B cell (primary cell): ENCODE measurements at regions of chr4 and their contacts with region 1.

Region 1: DNA sequence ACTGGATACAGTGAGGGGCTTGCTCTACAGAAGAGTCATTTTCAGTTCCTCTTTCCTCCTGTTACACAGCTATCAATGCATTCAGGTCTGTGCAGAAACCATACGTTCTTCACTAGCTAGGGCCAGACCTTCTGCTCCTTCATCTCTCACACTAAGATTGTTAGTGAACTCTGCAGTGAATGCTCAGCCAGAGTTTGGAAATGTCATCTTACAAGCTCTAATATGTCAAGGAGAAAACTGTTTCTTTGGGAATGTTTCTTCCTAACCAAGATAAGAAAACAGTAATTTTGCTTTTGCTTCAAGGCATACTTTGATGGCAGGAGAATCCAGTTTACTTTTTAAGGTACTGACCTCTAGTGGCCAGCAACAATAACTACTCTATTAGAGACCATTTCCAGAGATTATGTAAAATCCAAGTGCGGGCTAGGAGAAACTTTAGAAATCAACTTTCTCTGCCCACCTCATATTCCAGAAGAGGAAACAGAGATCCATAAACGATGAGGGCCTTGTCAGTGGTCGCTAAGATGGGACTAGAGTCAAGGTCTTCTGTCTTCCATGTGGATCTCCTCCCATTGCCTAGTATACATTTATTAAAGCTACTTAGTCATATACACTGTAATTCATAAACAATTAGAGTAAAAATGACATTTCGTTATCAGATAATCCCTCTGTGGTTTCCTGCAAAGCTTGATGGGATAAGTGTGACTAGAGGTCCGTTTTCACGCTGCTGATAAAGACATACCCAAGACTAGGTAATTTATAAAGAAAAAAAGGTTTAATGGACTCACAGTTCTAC is 12.1 kb upstream of the CC2D2A start:
- DNase-seq: peak; percentile 83
- ATAC-seq: peak; percentile 99
- H3K4me3 ChIP-seq: peak overlapping the region in 2 of 5 experiments; percentile 24 to 30
- H3K4me3 Mint-ChIP-seq: peak overlapping the region; percentile 81
- H3K27ac ChIP-seq: peak overlapping the region in 1 of 2 donors; percentile 24
- H3K27ac Mint-ChIP-seq: peak overlapping the region; percentile 80
- H3K4me1 ChIP-seq: peaks cover 14 to 16% of the 10 kb centered on the region in 2 donors
- H3K4me1 Mint-ChIP-seq: peaks cover 19% of the 10 kb centered on the region
- H3K27me3 ChIP-seq: no peaks in the 10 kb centered on the region
- H3K27me3 Mint-ChIP-seq: peaks cover 12% of the 10 kb centered on the region
- CTCF ChIP-seq: peak; percentile 88

Region 2: GRCh38 chr4:15231265-15232091 is 226.1 kb before region 1 on chr4:
- CTCF ChIA-PET with region 1: interaction called, 78 read pairs
- POLR2A ChIA-PET with region 1: no interaction called
- intact Hi-C with region 1: loop called (anchors 1 kb)
- DNase-seq: peak; percentile 79
- ATAC-seq: peak; percentile 79
- H3K4me3 ChIP-seq: no peak overlapping the region
- H3K4me3 Mint-ChIP-seq: no peak overlapping the region
- H3K27ac ChIP-seq: no peak overlapping the region
- H3K27ac Mint-ChIP-seq: no peak overlapping the region
- H3K4me1 ChIP-seq: peaks cover 13 to 16% of the 10 kb centered on the region in 2 donors
- H3K4me1 Mint-ChIP-seq: peaks cover 25% of the 10 kb centered on the region
- H3K27me3 ChIP-seq: no peaks in the 10 kb centered on the region
- H3K27me3 Mint-ChIP-seq: peaks cover 3% of the 10 kb centered on the region
- CTCF ChIP-seq: peak; percentile 79

Region 3: DNA sequence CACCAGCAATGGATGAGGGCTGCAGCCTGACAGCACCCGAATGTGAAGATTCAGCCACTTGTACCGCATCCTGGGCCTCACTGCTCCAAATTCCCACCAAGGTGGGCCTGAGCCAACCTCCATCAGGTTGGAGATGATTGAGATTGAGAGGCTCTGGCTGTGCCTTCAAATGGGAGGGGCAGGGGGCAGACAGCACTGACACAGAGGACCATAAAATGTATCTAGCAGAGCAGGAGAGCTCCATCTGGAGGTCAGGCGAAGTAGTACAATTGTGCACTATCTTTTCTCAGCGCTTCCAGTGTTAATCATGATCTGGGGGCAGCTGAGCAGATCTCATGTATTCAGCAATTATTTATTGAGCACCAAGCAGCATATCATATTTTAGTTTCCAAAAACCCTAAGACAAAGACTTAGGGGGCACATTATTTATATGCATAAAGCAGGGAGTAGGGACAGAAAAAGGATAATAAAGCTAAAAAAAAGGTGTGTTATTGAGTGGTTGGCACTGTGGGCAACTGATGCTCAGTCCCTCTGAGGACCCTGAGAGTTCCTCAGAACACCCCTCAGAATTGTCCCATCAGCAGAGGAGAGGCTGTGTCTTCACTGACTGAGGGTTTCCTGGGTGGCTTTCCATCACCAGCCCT is 61.3 kb before region 1 on chr4:
- CTCF ChIA-PET with region 1: interaction called, 30 read pairs
- POLR2A ChIA-PET with region 1: no interaction called
- intact Hi-C with region 1: loop called (anchors 2 kb)
- DNase-seq: peak; percentile 67
- ATAC-seq: peak; percentile 71
- H3K4me3 ChIP-seq: no peak overlapping the region
- H3K4me3 Mint-ChIP-seq: no peak overlapping the region
- H3K27ac ChIP-seq: no peak overlapping the region
- H3K27ac Mint-ChIP-seq: no peak overlapping the region
- H3K4me1 ChIP-seq: peaks cover 24 to 32% of the 10 kb centered on the region in 2 donors
- H3K4me1 Mint-ChIP-seq: peaks cover 23% of the 10 kb centered on the region
- H3K27me3 ChIP-seq: no peaks in the 10 kb centered on the region
- H3K27me3 Mint-ChIP-seq: no peaks in the 10 kb centered on the region
- CTCF ChIP-seq: peak; percentile 91

Region 4: GRCh38 chr4:15416357-15417232 is 41.0 kb before region 1 on chr4:
- CTCF ChIA-PET with region 1: interaction called, 10 read pairs
- POLR2A ChIA-PET with region 1: no interaction called
- intact Hi-C with region 1: loop called (anchors 5 kb)
- DNase-seq: peak; percentile 46
- ATAC-seq: peak; percentile 60
- H3K4me3 ChIP-seq: peak overlapping the region; percentile 1 to 47 (median 30)
- H3K4me3 Mint-ChIP-seq: peak overlapping the region; percentile 76
- H3K27ac ChIP-seq: peak overlapping the region; percentile 56 to 67
- H3K27ac Mint-ChIP-seq: peak overlapping the region; percentile 89
- H3K4me1 ChIP-seq: peaks cover 52 to 54% of the 10 kb centered on the region in 2 donors
- H3K4me1 Mint-ChIP-seq: peaks cover 54% of the 10 kb centered on the region
- H3K27me3 ChIP-seq: no peaks in the 10 kb centered on the region
- H3K27me3 Mint-ChIP-seq: no peaks in the 10 kb centered on the region
- CTCF ChIP-seq: no peak

Region 5: DNA sequence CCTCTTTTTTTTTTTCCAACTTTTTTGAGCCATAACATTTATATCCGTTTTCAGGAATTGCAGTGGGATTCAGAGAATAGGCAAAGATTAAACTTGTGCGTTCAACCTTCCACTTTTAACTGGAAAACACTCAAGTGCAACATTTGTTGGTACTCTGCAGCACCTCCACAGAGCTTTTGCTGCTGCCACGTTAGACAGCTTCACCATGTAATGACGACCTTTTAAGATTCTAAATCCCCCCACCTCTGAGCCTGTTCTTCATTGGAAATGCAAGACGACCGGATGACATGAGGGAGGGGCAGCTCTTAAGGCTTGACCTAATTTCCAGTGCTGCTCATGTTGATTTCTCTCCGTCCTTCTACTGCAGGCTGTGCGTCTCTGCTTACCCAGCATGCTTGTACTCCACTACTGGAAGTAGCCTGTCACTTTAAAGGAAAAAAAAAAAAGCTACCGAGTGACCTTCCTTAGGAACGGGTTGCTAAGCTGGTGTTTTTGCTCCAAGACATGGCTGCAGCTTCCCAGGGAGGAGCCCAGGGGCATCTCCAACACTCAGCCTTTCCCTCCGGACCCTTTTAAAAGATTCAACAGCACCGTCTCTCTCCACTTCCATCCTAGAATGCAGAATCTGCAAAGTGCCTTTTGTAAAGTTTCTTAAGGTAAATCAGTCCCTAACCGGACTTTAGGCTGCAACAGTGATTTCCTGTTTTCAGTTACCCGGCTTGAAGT is 12.0 kb after region 1 on chr4 and contains the start of gene CC2D2A:
- CTCF ChIA-PET with region 1: interaction called, 22 read pairs
- POLR2A ChIA-PET with region 1: interaction called, 3 read pairs
- intact Hi-C with region 1: no loop called
- DNase-seq: no peak
- ATAC-seq: no peak
- H3K4me3 ChIP-seq: peak within 1 kb of the TSS in 4 of 5 experiments; percentile 5 to 19 (median 18)
- H3K4me3 Mint-ChIP-seq: peak within 1 kb of the TSS; percentile 51
- H3K27ac ChIP-seq: no peak within 1 kb of the TSS
- H3K27ac Mint-ChIP-seq: no peak within 1 kb of the TSS
- H3K4me1 ChIP-seq: peaks cover 10 to 11% of the 10 kb centered on the region in 2 donors
- H3K4me1 Mint-ChIP-seq: peaks cover 9% of the 10 kb centered on the region
- H3K27me3 ChIP-seq: peaks cover 0 to 9% (median 2%) of the 10 kb centered on the region in 4 experiments
- H3K27me3 Mint-ChIP-seq: peaks cover 27% of the 10 kb centered on the region
- CTCF ChIP-seq: no peak
- total RNA-seq, gene CC2D2A: not detected in 2 replicates

Region 6: GRCh38 chr4:15495621-15496020 is 38.0 kb after region 1 on chr4:
- CTCF ChIA-PET with region 1: no interaction called
- POLR2A ChIA-PET with region 1: no interaction called
- intact Hi-C with region 1: no loop called
- DNase-seq: no peak
- ATAC-seq: no peak
- H3K4me3 ChIP-seq: no peak overlapping the region
- H3K4me3 Mint-ChIP-seq: no peak overlapping the region
- H3K27ac ChIP-seq: no peak overlapping the region
- H3K27ac Mint-ChIP-seq: no peak overlapping the region
- H3K4me1 ChIP-seq: no peaks in the 10 kb centered on the region
- H3K4me1 Mint-ChIP-seq: no peaks in the 10 kb centered on the region
- H3K27me3 ChIP-seq: no peaks in the 10 kb centered on the region
- H3K27me3 Mint-ChIP-seq: peaks cover 4% of the 10 kb centered on the region
- CTCF ChIP-seq: no peak